PC-3 (cell line): ENCODE measurements at regions of chr11 and their contacts with region 1.

Region 1: DNA sequence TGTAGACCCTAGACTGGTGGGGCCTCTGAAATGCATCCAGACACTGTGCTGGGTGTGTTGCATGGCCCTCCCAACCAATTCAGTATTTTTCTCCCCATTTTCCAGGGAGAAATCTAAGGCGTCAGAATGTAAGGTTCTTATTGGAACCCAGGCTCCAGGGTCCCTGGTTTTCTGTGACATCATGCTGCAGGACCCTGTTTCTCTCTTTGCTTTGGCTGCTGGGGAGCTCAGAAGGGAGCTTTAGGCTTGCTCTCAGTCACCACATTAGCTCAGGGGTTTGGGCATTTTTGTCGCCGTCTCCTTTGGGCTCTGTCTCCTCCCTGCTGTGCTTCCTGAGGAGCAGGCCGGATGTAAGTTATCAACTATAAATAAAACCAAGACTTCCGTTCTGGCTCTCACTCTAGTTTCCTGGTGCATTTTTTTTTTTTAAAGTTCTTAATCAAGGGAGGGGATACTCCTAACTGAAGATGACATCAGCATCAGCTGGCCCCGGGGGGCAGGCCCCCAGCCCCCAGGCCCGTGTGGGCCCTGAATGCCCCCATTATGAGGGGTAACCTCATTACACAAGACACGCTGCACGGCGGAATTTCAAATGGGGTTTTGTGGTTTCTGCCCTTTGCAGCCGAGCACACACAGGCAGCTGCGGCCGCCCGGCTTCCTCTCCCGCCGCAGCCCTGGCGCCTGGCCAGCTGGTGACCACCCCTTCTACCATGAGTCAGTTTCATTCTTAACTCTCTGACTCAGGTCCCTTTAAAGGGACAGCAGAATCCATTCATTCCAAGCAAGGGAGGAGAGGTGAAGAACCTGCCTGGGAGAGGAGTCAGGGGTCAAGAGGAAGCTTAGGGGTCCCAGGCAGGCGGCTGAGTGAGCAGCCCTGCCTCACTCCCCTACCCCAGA is 3.2 kb downstream of the MYEOV start:
- DNase-seq: peak; percentile 100
- ATAC-seq: peak; percentile 7
- H3K4me3 ChIP-seq: peak overlapping the region; percentile 76
- H3K27ac ChIP-seq: peak overlapping the region; percentile 98
- H3K4me1 ChIP-seq: peaks cover 71% of the 10 kb centered on the region
- H3K27me3 ChIP-seq: no peaks in the 10 kb centered on the region
- CTCF ChIP-seq: no peak

Region 2: GRCh38 chr11:69122642-69123431 is 174.3 kb before region 1 on chr11:
- CTCF ChIA-PET with region 1: no interaction called
- POLR2A ChIA-PET with region 1: no interaction called
- intact Hi-C with region 1: loop called (anchors 2 kb)
- DNase-seq: peak; percentile 100
- ATAC-seq: peak; percentile 94
- H3K4me3 ChIP-seq: peak overlapping the region; percentile 41
- H3K27ac ChIP-seq: peak overlapping the region; percentile 97
- H3K4me1 ChIP-seq: peaks cover 32% of the 10 kb centered on the region
- H3K27me3 ChIP-seq: no peaks in the 10 kb centered on the region
- CTCF ChIP-seq: no peak

Region 3: DNA sequence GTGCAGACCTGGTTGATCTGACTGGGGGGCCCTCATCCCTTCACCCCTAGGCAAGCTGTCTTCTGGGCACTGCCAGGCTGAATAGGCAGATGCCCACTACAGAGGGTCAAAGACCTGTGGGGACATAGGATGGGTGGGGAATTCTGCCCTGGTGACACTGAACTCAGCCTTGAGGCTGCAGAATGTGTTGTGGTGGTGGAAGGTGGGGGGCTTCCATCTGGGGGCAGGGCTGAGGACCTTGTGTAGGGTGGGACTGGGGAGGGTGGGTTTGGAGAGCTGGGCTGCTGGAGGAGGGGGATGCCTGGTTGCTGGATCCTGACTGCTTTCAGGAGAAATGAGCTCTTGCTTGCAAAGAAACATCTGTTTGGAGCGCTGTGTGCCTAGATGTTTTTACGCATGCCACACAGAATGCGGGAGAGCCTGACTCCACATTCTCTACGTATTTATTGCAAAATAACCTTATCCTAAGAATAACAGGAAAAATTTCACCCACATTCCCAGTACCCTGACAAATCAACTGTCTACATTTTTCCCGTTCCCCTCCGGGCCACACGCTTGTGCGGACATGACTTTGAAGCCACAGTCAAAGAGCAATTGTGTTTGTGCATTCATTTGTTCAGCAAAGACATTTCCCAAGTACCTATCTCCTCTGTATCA is 123.1 kb before region 1 on chr11:
- CTCF ChIA-PET with region 1: no interaction called
- POLR2A ChIA-PET with region 1: no interaction called
- intact Hi-C with region 1: no loop called
- DNase-seq: no peak
- ATAC-seq: no peak
- H3K4me3 ChIP-seq: no peak overlapping the region
- H3K27ac ChIP-seq: no peak overlapping the region
- H3K4me1 ChIP-seq: no peaks in the 10 kb centered on the region
- H3K27me3 ChIP-seq: no peaks in the 10 kb centered on the region
- CTCF ChIP-seq: no peak

Region 4: DNA sequence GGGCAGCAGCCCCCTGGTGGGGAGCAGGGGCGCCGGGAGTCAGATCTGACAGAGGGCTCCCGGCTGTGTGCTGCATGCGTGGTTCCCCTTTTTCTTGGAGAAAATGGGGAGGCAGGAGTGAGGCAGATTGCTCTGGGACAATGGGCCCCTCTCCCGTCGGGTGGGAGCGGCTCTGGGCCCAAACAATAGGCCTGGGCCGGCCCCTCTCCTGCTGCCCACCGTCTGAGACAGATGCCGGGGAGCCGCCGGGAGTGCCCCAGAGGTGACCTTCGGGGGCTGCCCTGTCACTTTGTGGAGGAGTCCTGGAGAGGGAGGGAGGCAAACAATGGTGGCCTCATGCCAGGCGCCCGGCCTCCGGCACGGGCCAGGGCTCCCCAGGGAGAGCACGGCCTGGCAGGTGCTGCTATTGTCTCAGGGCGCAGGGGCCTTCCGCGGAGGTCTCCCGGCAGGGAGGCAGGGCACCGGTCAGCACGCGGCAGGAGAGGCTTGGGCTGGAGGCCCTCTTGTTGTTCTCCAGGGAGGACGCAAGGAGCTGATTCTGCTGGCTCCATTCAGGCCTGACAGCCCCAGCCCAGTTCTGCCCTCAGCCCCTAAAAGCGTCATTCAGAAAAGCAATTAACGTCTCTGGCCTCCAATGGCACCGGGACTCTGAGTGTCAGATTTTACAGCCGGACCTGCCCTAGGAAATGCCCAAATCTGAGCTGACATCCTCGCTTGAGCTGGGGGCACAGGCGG is 96.6 kb before region 1 on chr11:
- CTCF ChIA-PET with region 1: no interaction called
- POLR2A ChIA-PET with region 1: no interaction called
- intact Hi-C with region 1: no loop called
- DNase-seq: no peak
- ATAC-seq: no peak
- H3K4me3 ChIP-seq: no peak overlapping the region
- H3K27ac ChIP-seq: no peak overlapping the region
- H3K4me1 ChIP-seq: no peaks in the 10 kb centered on the region
- H3K27me3 ChIP-seq: no peaks in the 10 kb centered on the region
- CTCF ChIP-seq: no peak

Region 5: DNA sequence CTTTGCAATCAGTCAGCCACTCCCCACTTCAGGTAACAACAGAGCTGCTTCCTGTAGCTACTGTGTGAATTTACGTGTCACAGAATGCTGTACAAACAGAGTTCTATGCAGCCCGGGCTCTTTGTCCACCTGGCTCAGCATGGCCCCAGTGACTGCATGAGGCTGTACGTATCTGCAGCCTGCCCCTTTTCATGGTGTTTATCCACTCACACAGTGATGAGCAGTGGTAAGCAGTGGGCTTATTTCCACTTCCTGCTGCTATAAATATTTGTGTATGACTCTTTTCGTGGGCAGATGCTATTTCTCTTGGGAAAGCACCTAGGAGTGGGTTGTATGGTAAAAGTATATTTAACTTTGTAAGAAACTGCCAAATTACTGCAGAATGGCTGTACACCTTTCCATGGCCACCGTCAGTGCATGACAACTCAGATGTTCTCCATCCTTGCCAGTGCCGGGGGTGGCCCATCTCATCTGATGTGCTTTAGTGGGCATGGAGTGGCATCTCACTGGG is 40.1 kb after region 1 on chr11:
- CTCF ChIA-PET with region 1: interaction called, 4 read pairs
- POLR2A ChIA-PET with region 1: interaction called, 5 read pairs
- intact Hi-C with region 1: loop called (anchors 1 kb)
- DNase-seq: peak; percentile 71
- ATAC-seq: peak; percentile 86
- H3K4me3 ChIP-seq: no peak overlapping the region
- H3K27ac ChIP-seq: peak overlapping the region; percentile 84
- H3K4me1 ChIP-seq: peaks cover 26% of the 10 kb centered on the region
- H3K27me3 ChIP-seq: no peaks in the 10 kb centered on the region
- CTCF ChIP-seq: no peak

Region 6: DNA sequence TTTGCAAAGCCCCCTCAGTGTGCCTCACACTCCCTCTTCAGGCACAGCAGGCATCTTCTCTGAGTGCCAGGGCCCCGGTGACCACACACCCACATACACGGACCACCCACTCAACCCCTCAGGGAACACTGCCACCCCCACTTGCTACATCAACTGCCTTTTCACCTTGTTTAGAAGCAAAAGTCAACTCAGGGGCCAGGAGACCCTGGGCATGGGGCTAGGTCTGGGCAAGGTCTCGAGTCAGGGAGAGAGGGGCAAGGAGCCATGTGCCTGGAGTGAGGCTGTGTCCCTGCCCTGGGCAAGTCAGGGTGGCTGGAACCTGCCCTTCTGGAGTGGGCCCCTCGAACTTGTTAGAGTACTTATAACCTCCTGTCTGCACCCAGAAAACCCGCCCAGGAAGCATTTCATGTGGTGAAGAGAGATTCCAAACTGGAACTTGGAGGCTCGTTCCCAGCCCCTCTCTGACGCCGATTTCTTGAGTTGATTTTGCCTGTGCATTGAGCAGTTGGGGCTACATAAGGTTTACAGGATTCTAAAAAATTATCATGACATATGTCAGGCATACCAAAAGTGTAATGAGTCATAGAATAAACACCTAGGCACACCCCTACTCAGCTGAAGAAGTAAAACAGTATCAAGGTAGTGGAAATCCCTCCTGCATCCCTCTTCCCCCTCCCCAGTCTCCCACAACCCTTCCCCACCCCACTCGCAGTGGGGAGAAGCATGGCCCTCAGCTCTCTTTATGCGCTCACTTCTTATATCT is 71.2 kb after region 1 on chr11:
- CTCF ChIA-PET with region 1: no interaction called
- POLR2A ChIA-PET with region 1: interaction called, 4 read pairs
- intact Hi-C with region 1: loop called (anchors 5 kb)
- DNase-seq: peak; percentile 82
- ATAC-seq: peak; percentile 85
- H3K4me3 ChIP-seq: peak overlapping the region; percentile 18
- H3K27ac ChIP-seq: peak overlapping the region; percentile 88
- H3K4me1 ChIP-seq: peaks cover 36% of the 10 kb centered on the region
- H3K27me3 ChIP-seq: no peaks in the 10 kb centered on the region
- CTCF ChIP-seq: no peak

Region 7: GRCh38 chr11:69642913-69643632 is 345.9 kb after region 1 on chr11:
- CTCF ChIA-PET with region 1: interaction called, 12 read pairs
- POLR2A ChIA-PET with region 1: interaction called, 14 read pairs
- intact Hi-C with region 1: loop called (anchors 1 kb)
- DNase-seq: peak; percentile 85
- ATAC-seq: peak; percentile 6
- H3K4me3 ChIP-seq: peak overlapping the region; percentile 99
- H3K27ac ChIP-seq: peak overlapping the region; percentile 84
- H3K4me1 ChIP-seq: peaks cover 39% of the 10 kb centered on the region
- H3K27me3 ChIP-seq: no peaks in the 10 kb centered on the region
- CTCF ChIP-seq: peak; percentile 90